Testis (tissue), 5 donors: ENCODE measurements at regions of chr1 and their contacts with region 1.

Region 1: DNA sequence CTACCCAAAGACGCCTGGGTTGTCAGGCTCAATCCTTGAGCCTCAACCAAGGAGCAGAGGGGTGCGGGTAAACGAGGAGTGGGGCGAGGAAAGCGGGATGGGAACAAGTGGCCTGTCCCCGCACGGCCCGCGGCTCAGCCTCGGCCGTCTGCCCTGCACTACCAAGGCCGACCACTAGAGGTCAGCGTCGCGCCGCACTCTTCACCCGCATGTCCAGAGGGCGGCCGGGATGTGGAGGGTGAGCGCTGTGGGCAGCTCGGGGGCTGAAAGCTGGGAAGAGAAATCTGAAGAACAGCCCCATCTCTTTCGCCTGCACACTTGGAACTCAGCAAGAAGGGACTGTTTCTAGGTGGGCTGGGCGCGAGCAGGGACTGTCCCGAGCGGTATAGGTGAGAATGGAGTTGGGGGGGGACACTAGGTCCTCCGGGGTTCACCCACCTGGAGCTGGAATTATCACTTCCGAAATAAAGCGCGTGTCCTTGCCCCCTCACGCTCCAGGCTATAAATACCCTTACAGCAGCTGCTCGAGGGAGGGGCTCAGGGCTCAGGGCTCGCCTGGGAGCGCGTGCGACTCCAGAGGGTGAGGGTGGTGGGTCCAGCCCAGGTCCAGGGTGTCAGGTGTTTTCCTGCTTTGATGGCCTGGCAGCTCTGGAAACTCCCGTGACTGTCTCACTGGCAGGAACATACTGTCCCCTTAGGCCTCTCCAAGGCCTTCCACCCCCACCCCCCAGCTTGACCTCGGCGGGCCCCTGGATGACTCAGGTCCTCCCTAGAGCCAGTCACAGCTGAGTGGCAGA is 9.8 kb downstream of the SLC30A2 start:
- DNase-seq: peak; percentile 88
- H3K4me3 ChIP-seq: peak overlapping the region; percentile 72 to 82
- H3K27ac ChIP-seq: peak overlapping the region; percentile 47 to 89
- H3K4me1 ChIP-seq: peaks cover 14% of the 10 kb centered on the region
- H3K27me3 ChIP-seq: no peaks in the 10 kb centered on the region
- CTCF ChIP-seq: peak; percentile 99 to 100 (median 100)
- POLR2A ChIP-seq: no peak

Region 2: DNA sequence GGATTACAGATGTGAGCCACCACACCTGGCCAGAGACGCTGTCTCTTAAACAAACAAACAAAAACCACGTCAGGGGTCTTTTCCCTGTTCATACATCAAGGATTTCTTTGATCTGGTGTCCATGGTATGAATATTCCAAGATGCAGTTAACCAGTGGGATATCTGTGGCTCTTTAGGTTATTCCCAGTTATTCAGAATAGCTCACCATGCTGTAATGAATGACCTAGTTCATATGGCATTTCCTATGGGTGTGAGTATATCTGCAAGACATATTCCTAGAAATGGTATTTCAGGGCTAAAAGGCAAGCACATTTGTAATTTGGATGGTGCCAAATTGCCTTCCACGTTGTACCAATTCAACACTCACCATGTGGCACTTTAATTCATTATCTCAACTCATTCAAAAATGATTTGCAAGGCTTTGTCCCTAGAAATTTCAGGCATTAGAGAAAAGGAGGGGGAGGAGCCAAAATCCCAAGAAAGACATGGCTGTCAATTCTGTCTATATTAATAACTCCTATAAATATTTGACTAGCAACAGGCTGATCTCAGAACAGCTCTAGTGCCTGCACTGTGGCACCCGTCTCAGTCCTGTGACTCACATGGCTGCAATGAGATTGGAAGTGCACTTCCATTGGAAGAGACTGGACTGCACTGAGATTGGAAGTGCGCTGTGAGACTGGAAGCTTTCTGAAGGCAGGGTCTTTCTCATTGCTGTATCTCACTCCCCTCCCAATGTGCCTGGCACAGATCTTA is 123.9 kb before region 1 on chr1:
- intact Hi-C with region 1: no loop called
- DNase-seq: no peak
- H3K4me3 ChIP-seq: no peak overlapping the region
- H3K27ac ChIP-seq: no peak overlapping the region
- H3K4me1 ChIP-seq: peaks cover 2% of the 10 kb centered on the region
- H3K27me3 ChIP-seq: no peaks in the 10 kb centered on the region
- CTCF ChIP-seq: no peak
- POLR2A ChIP-seq: no peak

Region 3: DNA sequence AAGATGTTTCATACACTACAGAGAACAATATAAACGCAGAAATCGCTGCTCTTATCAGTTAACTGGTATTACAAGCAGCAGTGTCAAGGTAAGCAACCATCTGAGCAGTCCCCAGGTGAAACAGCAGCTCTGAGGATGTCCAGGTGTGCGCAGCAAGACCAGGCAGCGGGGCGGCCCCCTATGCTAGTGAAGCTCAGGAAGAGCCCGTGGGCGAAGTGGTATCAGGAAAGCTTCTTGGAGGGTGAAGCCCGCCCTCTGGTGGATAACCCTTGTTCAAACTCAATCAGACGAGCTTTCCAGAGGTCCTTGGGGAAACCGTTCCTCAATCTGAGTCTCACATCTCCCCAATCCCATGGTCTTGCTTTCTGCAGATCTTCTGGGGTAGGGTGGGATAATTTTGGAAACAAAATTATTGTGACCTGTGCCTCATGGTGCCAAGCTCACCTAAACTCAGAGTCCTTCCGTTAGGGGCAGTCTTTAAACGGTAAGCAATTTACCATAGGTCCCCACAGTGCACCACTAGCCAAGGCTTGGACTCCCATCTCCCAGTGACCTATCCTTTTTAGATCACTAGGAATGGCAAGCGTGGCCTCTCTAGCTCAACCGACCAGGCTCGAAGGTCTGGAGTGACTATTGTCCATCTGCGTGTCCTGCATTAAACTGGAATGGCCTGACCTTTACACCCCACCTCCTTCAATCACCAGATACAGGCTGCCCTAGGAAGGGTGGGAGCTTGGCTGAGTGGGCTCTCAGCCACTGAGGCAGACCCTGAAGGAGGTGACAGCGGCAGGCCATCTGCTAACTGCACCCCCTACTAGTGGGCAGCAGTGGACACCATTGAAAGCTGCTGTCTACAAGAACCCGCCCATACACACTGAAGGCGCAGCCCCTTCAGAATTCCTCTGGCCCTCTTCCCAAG is 109.1 kb after region 1 on chr1:
- intact Hi-C with region 1: loop called (anchors 10 kb)
- DNase-seq: peak; percentile 90
- H3K4me3 ChIP-seq: no peak overlapping the region
- H3K27ac ChIP-seq: no peak overlapping the region
- H3K4me1 ChIP-seq: no peaks in the 10 kb centered on the region
- H3K27me3 ChIP-seq: no peaks in the 10 kb centered on the region
- CTCF ChIP-seq: peak; percentile 65 to 72 (median 65)
- POLR2A ChIP-seq: no peak

Region 4: DNA sequence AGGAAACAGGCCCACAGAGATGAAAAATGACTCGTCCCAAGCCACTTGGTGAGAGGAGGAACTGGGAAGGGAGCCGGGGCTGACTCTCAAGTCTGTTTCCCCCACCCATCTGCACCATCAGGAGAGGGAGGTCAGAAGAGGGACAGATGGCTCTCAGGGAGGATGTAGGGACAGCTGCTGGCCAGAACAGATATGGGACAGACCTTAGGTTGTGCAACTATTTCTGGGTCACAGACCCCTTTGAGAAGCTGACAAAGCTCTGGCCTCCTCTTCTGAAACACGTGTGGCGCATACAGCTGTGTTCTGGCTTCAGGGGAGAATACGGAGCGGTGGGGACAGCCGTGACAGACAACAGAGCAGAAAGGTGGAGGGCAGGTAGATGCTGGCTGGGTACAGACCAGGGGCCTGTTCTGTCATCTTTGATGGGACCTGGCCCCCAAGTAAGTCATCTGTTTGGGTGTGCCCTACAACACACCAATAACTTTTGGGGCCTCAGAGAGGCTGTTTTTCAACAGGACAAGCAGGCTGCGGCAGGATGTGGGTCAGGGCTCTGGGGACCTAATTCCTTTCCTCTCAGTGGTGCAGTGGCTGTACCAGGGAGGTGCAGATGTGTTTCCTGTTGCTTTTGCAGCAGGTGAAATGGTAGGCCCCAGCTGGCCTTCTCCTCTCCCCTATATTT is 251.0 kb after region 1 on chr1:
- intact Hi-C with region 1: no loop called
- DNase-seq: no peak
- H3K4me3 ChIP-seq: no peak overlapping the region
- H3K27ac ChIP-seq: no peak overlapping the region
- H3K4me1 ChIP-seq: peaks cover 11% of the 10 kb centered on the region
- H3K27me3 ChIP-seq: no peaks in the 10 kb centered on the region
- CTCF ChIP-seq: no peak
- POLR2A ChIP-seq: no peak